Activated T-helper 1 cell treated with anti-CD3 and anti-CD28 coated beads, Interleukin-12 subunit alpha, Interleukin-12 subunit beta, Interleukin-2, Interleukin-4 antibody, amounts not matched to agents 30 ng/mL and 10 ng/mL and 1 ng/mL, durations not matched to agents 14 hours and 24 hours and 36 hours (primary cell): ENCODE measurements at regions of chrX and their contacts with region 1.

Region 1: GRCh38 chrX:77003956-77004355 is 443.2 kb upstream of the FGF16 start:
- DNase-seq: peak; percentile 22
- H3K4me3 Mint-ChIP-seq: no peak overlapping the region
- H3K27ac Mint-ChIP-seq: peak overlapping the region; percentile 63
- H3K4me1 Mint-ChIP-seq: peaks cover 18% of the 10 kb centered on the region
- H3K27me3 Mint-ChIP-seq: peaks cover 2% of the 10 kb centered on the region

Region 2: GRCh38 chrX:76971393-76972376 is 32.3 kb before region 1 on chrX:
- intact Hi-C with region 1: loop called (anchors 1 kb)
- DNase-seq: no peak
- H3K4me3 Mint-ChIP-seq: no peak overlapping the region
- H3K27ac Mint-ChIP-seq: peak overlapping the region; percentile 40
- H3K4me1 Mint-ChIP-seq: no peaks in the 10 kb centered on the region
- H3K27me3 Mint-ChIP-seq: no peaks in the 10 kb centered on the region